CD4-positive, alpha-beta T cell (primary cell): ENCODE measurements at regions of chr7 and their contacts with region 1.

Region 1: DNA sequence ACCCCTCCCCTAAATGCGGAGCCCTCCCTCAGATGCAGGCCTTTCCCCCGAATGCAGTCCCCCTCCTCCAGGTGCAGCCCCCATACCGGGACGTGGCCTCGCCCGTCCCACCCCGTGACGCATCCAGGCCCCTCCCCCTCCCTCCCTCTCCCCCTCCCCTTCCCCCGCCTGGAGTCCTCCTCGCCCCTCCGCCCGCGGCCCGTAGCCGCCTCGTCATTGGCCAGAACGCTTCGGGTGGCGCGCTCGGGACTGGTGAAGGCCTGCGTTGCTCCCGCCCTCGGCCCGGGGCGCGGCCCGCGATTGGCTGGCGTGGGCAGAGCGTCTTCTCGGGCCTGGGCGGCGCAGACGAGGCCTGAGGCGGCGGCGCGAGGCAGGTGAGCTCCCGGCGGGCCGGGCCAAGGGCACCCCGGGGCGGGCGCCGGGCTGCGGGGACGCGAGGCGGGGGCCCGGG is 16.0 kb upstream of the SUN1 start:
- DNase-seq: peak; percentile 95 to 99 (median 97)
- ATAC-seq: peak; percentile 94
- H3K4me3 ChIP-seq: peak overlapping the region; percentile 64
- H3K4me3 Mint-ChIP-seq: peak overlapping the region; percentile 85
- H3K27ac ChIP-seq: no peak overlapping the region
- H3K27ac Mint-ChIP-seq: peak overlapping the region; percentile 85
- H3K4me1 ChIP-seq: peaks cover 50% of the 10 kb centered on the region
- H3K4me1 Mint-ChIP-seq: peaks cover 67% of the 10 kb centered on the region
- H3K27me3 ChIP-seq: no peaks in the 10 kb centered on the region
- H3K27me3 Mint-ChIP-seq: no peaks in the 10 kb centered on the region
- CTCF ChIP-seq: no peak

Region 2: DNA sequence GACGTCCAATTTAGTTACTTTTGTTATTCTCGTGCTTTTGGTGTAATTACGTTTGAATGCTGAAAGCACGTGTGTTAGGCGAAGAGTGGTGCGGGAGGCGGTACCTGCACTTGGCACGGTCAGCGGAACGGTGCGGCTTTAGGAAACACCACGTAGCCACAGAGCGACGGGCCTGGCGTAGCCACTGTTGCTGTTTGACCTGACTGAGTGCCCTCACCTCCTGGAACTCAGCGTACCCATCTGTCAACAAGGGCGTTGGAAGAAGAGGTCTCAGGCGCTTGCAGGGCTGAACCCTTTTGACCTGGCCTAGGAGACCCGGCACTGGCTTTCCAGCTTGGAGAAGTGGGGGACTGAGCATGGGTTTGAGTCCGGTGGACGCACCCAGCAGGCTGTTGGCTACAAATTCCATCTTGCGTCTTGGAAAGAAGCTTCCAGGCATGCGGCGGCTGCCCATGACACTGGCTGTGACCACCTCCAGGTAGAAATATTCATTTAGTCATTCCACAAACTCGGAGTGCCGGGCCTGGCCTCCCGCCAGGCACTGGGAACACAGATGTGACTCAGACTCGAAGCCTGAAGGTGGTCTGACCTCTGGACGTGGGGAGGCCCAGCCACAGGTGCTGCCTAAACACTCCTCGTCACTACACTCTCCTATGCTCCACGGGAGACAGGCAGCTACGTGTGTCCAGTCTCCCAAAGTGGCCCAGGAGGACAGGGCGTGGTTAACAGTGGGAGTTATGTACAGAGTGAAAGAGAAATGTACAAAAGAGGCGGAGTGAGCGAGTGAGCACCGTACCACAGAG is 601.7 kb before region 1 on chr7:
- CTCF ChIA-PET with region 1: no interaction called
- POLR2A ChIA-PET with region 1: no interaction called
- intact Hi-C with region 1: no loop called
- DNase-seq: no peak
- ATAC-seq: no peak
- H3K4me3 ChIP-seq: no peak overlapping the region
- H3K4me3 Mint-ChIP-seq: no peak overlapping the region
- H3K27ac ChIP-seq: no peak overlapping the region
- H3K27ac Mint-ChIP-seq: no peak overlapping the region
- H3K4me1 ChIP-seq: no peaks in the 10 kb centered on the region
- H3K4me1 Mint-ChIP-seq: no peaks in the 10 kb centered on the region
- H3K27me3 ChIP-seq: no peaks in the 10 kb centered on the region
- H3K27me3 Mint-ChIP-seq: no peaks in the 10 kb centered on the region
- CTCF ChIP-seq: no peak

Region 3: DNA sequence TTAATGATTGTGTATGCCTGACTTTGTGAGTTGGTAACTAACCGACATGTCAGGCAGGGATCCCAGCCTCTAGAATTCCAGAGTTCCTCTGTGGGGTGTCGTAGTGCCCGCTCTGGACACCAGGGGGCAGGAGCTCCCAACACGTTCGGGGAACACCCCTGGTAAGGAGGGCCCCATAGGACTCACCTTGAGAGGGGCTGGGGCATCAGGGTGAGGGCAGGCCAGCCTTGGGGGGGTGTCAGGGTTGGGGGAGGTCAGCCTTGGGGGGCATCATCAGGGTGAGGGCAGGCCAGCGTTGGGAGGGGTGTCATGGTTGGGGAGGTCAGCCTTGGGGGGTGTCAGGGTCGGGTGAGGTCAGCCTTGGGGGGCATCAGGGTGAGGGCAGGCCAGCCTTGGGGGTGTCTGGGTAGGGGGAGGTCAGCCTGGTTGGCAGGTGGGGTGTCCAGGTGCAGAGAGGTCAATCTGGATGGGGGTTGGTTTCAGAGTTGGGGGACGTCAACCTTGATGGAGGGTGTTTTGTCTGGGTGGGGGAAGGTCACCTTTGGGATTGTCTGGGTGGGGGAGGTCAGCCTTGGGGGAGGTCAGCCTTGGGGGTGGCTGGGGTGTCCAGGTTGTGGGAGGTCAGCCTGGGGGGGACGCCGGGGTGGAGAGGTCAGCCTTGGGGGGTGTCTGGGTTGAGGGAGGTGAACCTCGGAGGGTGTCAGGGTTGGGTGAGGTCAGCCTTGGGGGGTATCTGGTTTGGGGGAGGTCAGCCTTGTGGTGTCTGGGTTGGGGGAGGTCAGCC is 29.7 kb before region 1 on chr7:
- CTCF ChIA-PET with region 1: interaction called, 6 read pairs
- POLR2A ChIA-PET with region 1: interaction called, 4 read pairs
- intact Hi-C with region 1: loop called in 1 of 2 experiments (anchors 2 kb)
- DNase-seq: peak; percentile 59 to 85 (median 68)
- ATAC-seq: peak; percentile 100
- H3K4me3 ChIP-seq: no peak overlapping the region
- H3K4me3 Mint-ChIP-seq: no peak overlapping the region
- H3K27ac ChIP-seq: no peak overlapping the region
- H3K27ac Mint-ChIP-seq: no peak overlapping the region
- H3K4me1 ChIP-seq: peaks cover 6% of the 10 kb centered on the region
- H3K4me1 Mint-ChIP-seq: no peaks in the 10 kb centered on the region
- H3K27me3 ChIP-seq: no peaks in the 10 kb centered on the region
- H3K27me3 Mint-ChIP-seq: no peaks in the 10 kb centered on the region
- CTCF ChIP-seq: peak; percentile 74